ENCODE measurements at regions of chr1 and their contacts with region 1.

Region 1: GRCh38 chr1:231357831-231358354 is 19.8 kb downstream of the SPRTN start:
- DNase-seq: peak; percentile 26 to 45
- H3K4me3 ChIP-seq: no peak overlapping the region
- H3K27ac ChIP-seq: peak overlapping the region; percentile 1 to 25
- H3K4me1 ChIP-seq: peaks cover 0 to 6% of the 10 kb centered on the region in 2 donors
- H3K27me3 ChIP-seq: no peaks in the 10 kb centered on the region
- CTCF ChIP-seq: peak; percentile 71 to 89 (median 83)
- POLR2A ChIP-seq: no peak

Region 2: DNA sequence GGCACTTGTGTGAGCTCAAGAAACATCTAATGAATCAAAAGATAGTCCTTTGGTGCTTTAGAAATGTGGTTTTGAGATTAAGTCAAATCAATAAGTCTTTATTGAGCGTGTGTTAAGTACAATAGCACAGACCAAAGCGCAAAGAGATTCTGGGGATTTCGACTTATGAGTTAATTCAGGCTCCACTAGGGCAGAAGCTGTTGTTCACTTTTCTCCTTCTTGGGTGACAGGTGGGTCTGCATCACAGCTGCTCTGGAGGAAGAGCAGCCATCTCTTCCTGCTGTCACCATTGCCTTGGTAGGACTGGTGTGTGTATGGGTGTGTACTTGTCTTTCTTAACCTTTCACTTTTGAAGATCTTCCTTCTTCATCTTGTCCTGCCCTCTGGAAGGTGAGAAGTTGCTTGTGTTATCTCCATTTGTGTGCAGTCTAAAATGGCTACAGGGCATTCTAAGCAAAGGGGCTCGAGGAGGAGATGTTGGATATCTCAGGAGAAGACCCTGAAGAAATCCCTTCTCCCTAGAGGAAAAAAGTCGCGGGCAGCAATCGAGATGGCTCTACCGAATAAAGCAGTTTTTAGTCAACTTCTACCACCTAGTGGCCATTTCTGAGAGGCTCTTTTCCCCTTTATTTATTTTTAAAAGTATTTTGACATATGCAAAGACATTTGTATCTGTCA is 245.8 kb after region 1 on chr1:
- intact Hi-C with region 1: loop called (anchors 5 kb)
- DNase-seq: peak in 1 of 2 donors; percentile 30
- H3K4me3 ChIP-seq: peak overlapping the region; percentile 32 to 47
- H3K27ac ChIP-seq: peak overlapping the region in 1 of 2 donors; percentile 41
- H3K4me1 ChIP-seq: no peaks in the 10 kb centered on the region
- H3K27me3 ChIP-seq: no peaks in the 10 kb centered on the region
- CTCF ChIP-seq: peak; percentile 61 to 74 (median 70)
- POLR2A ChIP-seq: no peak